Dendritic cell treated with granulocyte-macrophage colony-stimulating factor and Interleukin-4, amounts not matched to agents 40 ng/mL and 50 ng/mL, for 4 days (primary cell): ENCODE measurements at regions of chr7 and their contacts with region 1.

Region 1: DNA sequence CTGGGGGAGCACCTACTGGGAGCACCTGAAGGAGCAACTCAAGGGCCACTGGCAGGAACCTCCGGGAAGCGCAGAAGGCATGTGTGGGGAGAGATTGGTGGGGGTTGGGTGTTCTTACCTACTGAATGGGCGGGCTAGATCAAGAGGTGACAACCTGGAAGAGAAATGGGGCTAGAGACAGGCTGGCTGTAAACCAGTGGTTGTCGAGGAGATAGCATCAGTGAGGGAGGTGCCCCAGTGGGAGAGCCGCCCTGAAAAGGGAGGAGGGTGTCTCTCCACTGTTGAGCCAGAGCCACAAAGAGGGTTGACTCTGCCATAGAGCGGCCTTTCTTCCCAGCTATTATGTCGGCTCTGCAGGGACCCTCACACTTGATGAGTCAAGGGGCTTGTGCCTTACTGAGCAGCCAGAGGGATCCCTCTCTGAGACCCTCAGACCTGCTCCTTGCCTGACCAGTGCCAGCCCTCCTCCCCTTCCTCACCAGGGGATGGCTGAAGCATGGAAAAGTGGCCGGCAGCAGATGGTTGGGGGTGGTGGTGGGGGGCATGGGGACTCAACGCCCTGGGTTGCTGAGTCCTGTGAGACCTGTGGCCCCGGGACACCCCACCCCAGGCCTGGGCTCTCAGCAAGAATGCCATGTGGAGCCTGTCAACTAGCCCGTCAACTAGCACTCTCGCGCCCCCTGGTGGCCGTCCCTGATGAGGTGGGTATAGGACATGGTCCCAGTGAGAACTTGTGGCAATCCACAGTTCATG is 36.5 kb upstream of the PURB start:
- H3K4me3 Mint-ChIP-seq: no peak overlapping the region
- H3K27ac Mint-ChIP-seq: no peak overlapping the region
- H3K4me1 Mint-ChIP-seq: peaks cover 5% of the 10 kb centered on the region
- H3K27me3 Mint-ChIP-seq: no peaks in the 10 kb centered on the region

Region 2: GRCh38 chr7:44587843-44588711 is 333.7 kb before region 1 on chr7:
- intact Hi-C with region 1: loop called (anchors 1 kb)
- H3K4me3 Mint-ChIP-seq: no peak overlapping the region
- H3K27ac Mint-ChIP-seq: no peak overlapping the region
- H3K4me1 Mint-ChIP-seq: peaks cover 2% of the 10 kb centered on the region
- H3K27me3 Mint-ChIP-seq: peaks cover 8% of the 10 kb centered on the region

Region 3: DNA sequence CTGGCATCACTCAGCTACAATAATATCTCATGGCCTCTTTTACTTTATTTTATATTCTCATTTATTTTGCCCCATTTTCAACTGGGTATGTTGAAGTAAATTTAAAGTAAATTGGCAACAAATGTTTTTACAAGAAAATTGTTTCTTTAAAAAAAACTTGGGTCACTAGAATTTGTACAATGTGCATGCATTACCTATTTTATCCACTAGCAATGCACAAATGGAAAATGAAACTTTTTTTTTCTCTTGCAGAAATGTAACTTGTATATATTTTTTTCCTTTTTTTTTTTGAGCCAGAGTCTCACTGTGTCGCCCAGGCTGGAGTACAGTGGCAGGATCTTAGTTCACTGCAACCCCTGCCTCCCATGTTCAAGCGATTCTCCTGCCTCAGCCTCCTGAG is 63.6 kb before region 1 on chr7:
- intact Hi-C with region 1: loop called (anchors 1 kb)
- H3K4me3 Mint-ChIP-seq: no peak overlapping the region
- H3K27ac Mint-ChIP-seq: no peak overlapping the region
- H3K4me1 Mint-ChIP-seq: peaks cover 6% of the 10 kb centered on the region
- H3K27me3 Mint-ChIP-seq: no peaks in the 10 kb centered on the region

Region 4: DNA sequence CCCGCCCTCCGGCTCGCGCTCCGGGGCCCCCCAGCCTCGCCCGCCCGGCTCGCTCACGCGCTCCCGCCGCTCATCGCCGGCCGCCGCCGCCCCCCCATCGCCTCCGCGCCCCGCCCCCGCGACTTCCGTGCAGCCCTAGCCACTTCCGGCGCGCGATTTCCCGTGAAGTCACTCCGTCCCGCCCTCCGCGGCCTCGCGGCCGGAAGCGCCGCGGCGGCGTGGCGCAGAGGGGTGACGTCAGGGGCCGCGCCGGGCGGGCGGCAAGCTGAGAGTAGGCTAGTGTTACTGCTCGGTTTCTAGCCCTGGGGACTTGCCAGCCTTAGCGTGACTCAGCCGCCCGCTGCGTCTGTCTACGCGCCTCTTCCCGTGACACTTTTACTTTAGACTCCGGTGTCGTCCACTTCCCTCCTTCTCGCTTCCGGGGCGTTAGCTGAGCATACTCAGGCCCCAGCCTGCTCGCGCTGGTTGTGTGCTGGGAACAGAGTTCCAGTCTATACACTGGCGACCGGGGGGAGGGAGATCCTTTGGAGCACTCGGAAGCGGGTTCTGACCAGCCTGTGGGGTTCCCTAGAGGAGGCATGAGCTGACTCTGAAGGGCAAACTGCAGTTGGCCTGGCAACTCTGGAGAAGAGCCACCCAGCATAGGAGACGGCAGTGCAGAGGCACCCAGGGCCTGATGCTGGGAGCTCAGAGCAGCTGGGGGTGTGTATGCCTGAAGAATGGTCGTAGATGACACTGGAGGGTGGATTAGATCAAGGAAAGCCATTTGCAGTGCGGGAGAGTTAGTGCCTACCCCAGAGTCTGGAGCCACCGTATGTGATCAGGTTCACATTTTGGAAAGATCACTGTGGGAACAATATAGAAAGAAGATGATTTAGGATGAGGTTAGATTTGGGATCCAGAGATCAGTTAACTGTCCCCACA is 36.1 kb before region 1 on chr7 and contains the start of gene PURB:
- intact Hi-C with region 1: loop called (anchors 5 kb)
- H3K4me3 Mint-ChIP-seq: peak within 1 kb of the TSS; percentile 88
- H3K27ac Mint-ChIP-seq: peak within 1 kb of the TSS; percentile 99
- H3K4me1 Mint-ChIP-seq: peaks cover 49% of the 10 kb centered on the region
- H3K27me3 Mint-ChIP-seq: no peaks in the 10 kb centered on the region

Region 5: GRCh38 chr7:46839651-46840050 is 1917.9 kb after region 1 on chr7:
- intact Hi-C with region 1: no loop called
- H3K4me3 Mint-ChIP-seq: no peak overlapping the region
- H3K27ac Mint-ChIP-seq: no peak overlapping the region
- H3K4me1 Mint-ChIP-seq: no peaks in the 10 kb centered on the region
- H3K27me3 Mint-ChIP-seq: no peaks in the 10 kb centered on the region